Breast epithelium (tissue), 4 donors: ENCODE measurements at regions of chr6 and their contacts with region 1.

Region 1: GRCh38 chr6:166939345-166939744 is 17.0 kb downstream of the RNASET2 start:
- DNase-seq: no peak
- H3K4me3 ChIP-seq: no peak overlapping the region
- H3K27ac ChIP-seq: no peak overlapping the region
- H3K4me1 ChIP-seq: no peaks in the 10 kb centered on the region
- H3K27me3 ChIP-seq: no peaks in the 10 kb centered on the region
- CTCF ChIP-seq: no peak
- POLR2A ChIP-seq: no peak

Region 2: DNA sequence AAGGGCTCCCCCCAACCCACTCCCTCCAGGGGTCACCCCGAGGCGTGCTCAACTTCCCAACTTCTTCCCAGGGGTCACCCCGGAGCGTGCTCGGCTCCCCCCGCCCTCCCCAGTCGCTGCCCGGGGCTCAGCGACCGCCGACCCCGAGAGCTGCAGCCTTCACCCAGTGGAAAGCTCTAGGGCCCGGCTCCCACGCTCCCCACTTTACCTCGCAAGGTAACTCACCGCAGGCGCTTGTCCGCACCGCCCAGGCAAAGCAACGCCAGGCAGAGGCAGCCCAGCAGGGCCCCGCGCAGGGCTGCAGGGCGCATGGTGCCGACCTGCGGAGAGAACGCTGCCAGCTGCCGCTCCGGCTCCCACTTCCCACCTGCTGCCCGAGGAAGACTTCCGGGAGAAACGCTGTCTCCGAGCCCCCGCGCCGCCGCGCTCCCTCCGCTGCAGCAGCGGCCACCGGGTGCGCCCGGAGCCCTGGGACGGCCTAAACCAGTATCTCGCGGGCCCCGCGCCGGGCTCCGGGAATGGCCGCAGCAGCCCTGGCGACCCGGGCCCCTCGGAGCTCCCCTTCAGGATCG is 16.6 kb after region 1 on chr6:
- intact Hi-C with region 1: loop called (anchors 2 kb)
- DNase-seq: no peak
- H3K4me3 ChIP-seq: peak overlapping the region; percentile 69 to 92 (median 84)
- H3K27ac ChIP-seq: peak overlapping the region; percentile 13 to 90
- H3K4me1 ChIP-seq: peaks cover 0 to 6% of the 10 kb centered on the region in 2 donors
- H3K27me3 ChIP-seq: no peaks in the 10 kb centered on the region
- CTCF ChIP-seq: no peak
- POLR2A ChIP-seq: no peak